ENCODE measurements at regions of chr11 and their contacts with region 1.

Region 1: DNA sequence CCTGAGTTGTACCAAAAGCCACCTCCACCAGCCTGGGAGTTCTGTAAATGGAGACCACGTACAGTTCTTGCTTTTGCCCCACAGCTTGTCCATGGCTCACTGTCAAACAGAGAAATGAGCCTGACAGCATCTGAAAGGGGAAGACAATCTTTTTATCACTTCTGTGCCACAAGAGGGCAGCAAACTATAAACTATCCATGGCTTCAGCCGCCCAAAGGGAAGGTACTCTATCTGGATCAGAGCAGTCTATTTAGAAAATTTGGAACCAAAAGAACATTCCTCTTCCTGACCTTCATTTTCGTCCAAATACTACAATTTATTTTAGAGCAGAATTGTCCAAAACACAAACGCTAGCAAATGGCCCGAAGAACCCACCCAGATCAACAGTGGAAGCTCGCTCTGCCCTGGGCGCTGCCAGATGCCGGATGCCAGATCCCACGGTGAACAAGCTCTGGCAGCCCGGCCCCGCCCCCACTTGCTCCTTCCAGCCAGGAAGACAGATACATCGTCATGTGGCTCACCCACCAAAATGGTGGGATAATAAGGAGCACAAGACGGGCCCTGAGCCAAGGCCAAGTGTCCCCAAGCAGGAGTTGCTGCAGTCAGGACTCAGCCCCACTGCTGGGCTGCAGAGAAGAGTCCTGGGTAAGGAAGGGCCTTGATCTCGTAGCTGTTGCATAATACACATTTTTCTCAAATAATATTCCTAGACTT is 23.9 kb upstream of the SCGB1A1 start:
- DNase-seq: peak; percentile 56 to 63 (median 59)
- H3K4me3 ChIP-seq: no peak overlapping the region
- H3K4me3 Mint-ChIP-seq: no peak overlapping the region
- H3K27ac ChIP-seq: no peak overlapping the region
- H3K27ac Mint-ChIP-seq: peak overlapping the region in 4 of 7 donors; percentile 58 to 68 (median 60)
- H3K4me1 ChIP-seq: peaks cover 24% of the 10 kb centered on the region
- H3K4me1 Mint-ChIP-seq: peaks cover 8 to 12% (median 10%) of the 10 kb centered on the region in 4 donors
- H3K27me3 ChIP-seq: no peaks in the 10 kb centered on the region
- H3K27me3 Mint-ChIP-seq: no peaks in the 10 kb centered on the region

Region 2: GRCh38 chr11:62383822-62384221 is 11.2 kb before region 1 on chr11:
- CTCF ChIA-PET with region 1: interaction called, 24 read pairs
- POLR2A ChIA-PET with region 1: interaction called, 3 read pairs
- intact Hi-C with region 1: loop called (anchors 1 kb)
- DNase-seq: no peak
- H3K4me3 ChIP-seq: no peak overlapping the region
- H3K4me3 Mint-ChIP-seq: no peak overlapping the region
- H3K27ac ChIP-seq: no peak overlapping the region
- H3K27ac Mint-ChIP-seq: no peak overlapping the region
- H3K4me1 ChIP-seq: peaks cover 18% of the 10 kb centered on the region
- H3K4me1 Mint-ChIP-seq: peaks cover 5 to 19% (median 10%) of the 10 kb centered on the region in 4 donors
- H3K27me3 ChIP-seq: no peaks in the 10 kb centered on the region
- H3K27me3 Mint-ChIP-seq: no peaks in the 10 kb centered on the region

Region 3: GRCh38 chr11:62694455-62695167 is 299.6 kb after region 1 on chr11:
- CTCF ChIA-PET with region 1: interaction called, 26 read pairs
- POLR2A ChIA-PET with region 1: no interaction called
- intact Hi-C with region 1: loop called (anchors 1 kb)
- DNase-seq: peak; percentile 73 to 80 (median 74)
- H3K4me3 ChIP-seq: no peak overlapping the region
- H3K4me3 Mint-ChIP-seq: no peak overlapping the region
- H3K27ac ChIP-seq: no peak overlapping the region
- H3K27ac Mint-ChIP-seq: peak overlapping the region in 4 of 7 donors; percentile 7 to 77 (median 56)
- H3K4me1 ChIP-seq: no peaks in the 10 kb centered on the region
- H3K4me1 Mint-ChIP-seq: peaks cover 5 to 7% (median 6%) of the 10 kb centered on the region in 4 donors
- H3K27me3 ChIP-seq: no peaks in the 10 kb centered on the region
- H3K27me3 Mint-ChIP-seq: no peaks in the 10 kb centered on the region

Measured in CD4-positive, alpha-beta memory T cell (primary cell).